Activated naive CD4-positive, alpha-beta T cell treated with anti-CD3 and anti-CD28 coated beads for 36 hours (primary cell): ENCODE measurements at regions of chr14 and their contacts with region 1.

Region 1: DNA sequence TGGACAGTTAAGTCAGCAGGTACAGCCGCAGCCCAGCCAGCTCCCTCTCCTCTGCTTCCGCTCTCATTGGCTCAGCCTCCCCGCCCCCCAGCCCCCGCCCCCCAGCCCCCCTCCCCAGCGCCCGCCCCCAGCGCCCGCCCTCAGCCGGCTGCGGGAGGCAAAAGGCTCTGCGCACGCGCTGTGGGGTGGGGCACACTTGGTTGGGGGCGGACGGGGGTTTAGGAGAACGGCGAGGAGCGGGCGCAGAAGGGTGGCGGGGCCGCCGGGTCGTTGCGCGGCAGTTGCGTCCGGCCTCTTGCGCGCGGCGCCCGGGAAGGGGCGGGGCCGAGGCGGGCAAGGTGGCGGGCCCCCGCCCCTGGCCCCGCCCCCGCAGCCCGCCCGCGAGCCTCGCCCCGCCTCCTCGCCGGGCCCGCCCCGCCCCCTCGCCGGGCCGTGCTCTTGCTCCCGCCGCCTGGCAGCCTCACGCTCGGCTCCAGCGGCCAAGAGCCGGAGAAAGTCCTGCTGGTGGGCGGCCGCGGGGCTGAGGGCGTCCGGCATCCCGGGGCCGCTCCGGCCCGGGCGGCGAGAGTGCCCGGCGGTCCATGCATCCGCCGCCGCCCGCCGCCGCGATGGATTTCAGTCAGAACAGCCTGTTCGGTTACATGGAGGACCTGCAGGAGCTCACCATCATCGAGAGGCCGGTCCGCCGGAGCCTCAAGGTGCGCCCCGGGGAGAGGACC is at the start of gene PPP4R4:
- DNase-seq: peak; percentile 95
- H3K4me3 Mint-ChIP-seq: peak within 1 kb of the TSS; percentile 76
- H3K27ac Mint-ChIP-seq: peak within 1 kb of the TSS; percentile 42
- H3K4me1 Mint-ChIP-seq: peaks cover 37% of the 10 kb centered on the region
- H3K27me3 Mint-ChIP-seq: no peaks in the 10 kb centered on the region
- total RNA-seq, gene PPP4R4: 13.2 to 13.9 TPM

Region 2: GRCh38 chr14:93959239-93960107 is 214.6 kb before region 1 on chr14:
- CTCF ChIA-PET with region 1: no interaction called
- intact Hi-C with region 1: loop called (anchors 5 kb)
- DNase-seq: peak; percentile 98
- H3K4me3 Mint-ChIP-seq: peak overlapping the region; percentile 68
- H3K27ac Mint-ChIP-seq: peak overlapping the region; percentile 99
- H3K4me1 Mint-ChIP-seq: peaks cover 95% of the 10 kb centered on the region
- H3K27me3 Mint-ChIP-seq: no peaks in the 10 kb centered on the region

Region 3: GRCh38 chr14:94036313-94037050 is 137.6 kb before region 1 on chr14:
- CTCF ChIA-PET with region 1: interaction called, 23 read pairs
- intact Hi-C with region 1: no loop called
- DNase-seq: peak; percentile 88
- H3K4me3 Mint-ChIP-seq: no peak overlapping the region
- H3K27ac Mint-ChIP-seq: no peak overlapping the region
- H3K4me1 Mint-ChIP-seq: peaks cover 3% of the 10 kb centered on the region
- H3K27me3 Mint-ChIP-seq: no peaks in the 10 kb centered on the region

Region 4: GRCh38 chr14:94136575-94137331 is 37.3 kb before region 1 on chr14:
- CTCF ChIA-PET with region 1: interaction called, 134 read pairs
- intact Hi-C with region 1: no loop called
- DNase-seq: peak; percentile 95
- H3K4me3 Mint-ChIP-seq: no peak overlapping the region
- H3K27ac Mint-ChIP-seq: no peak overlapping the region
- H3K4me1 Mint-ChIP-seq: peaks cover 2% of the 10 kb centered on the region
- H3K27me3 Mint-ChIP-seq: no peaks in the 10 kb centered on the region

Region 5: GRCh38 chr14:94345337-94346064 is 171.5 kb after region 1 on chr14:
- CTCF ChIA-PET with region 1: no interaction called
- intact Hi-C with region 1: loop called (anchors 2 kb)
- DNase-seq: no peak
- H3K4me3 Mint-ChIP-seq: no peak overlapping the region
- H3K27ac Mint-ChIP-seq: peak overlapping the region; percentile 54
- H3K4me1 Mint-ChIP-seq: peaks cover 33% of the 10 kb centered on the region
- H3K27me3 Mint-ChIP-seq: peaks cover 35% of the 10 kb centered on the region

Region 6: DNA sequence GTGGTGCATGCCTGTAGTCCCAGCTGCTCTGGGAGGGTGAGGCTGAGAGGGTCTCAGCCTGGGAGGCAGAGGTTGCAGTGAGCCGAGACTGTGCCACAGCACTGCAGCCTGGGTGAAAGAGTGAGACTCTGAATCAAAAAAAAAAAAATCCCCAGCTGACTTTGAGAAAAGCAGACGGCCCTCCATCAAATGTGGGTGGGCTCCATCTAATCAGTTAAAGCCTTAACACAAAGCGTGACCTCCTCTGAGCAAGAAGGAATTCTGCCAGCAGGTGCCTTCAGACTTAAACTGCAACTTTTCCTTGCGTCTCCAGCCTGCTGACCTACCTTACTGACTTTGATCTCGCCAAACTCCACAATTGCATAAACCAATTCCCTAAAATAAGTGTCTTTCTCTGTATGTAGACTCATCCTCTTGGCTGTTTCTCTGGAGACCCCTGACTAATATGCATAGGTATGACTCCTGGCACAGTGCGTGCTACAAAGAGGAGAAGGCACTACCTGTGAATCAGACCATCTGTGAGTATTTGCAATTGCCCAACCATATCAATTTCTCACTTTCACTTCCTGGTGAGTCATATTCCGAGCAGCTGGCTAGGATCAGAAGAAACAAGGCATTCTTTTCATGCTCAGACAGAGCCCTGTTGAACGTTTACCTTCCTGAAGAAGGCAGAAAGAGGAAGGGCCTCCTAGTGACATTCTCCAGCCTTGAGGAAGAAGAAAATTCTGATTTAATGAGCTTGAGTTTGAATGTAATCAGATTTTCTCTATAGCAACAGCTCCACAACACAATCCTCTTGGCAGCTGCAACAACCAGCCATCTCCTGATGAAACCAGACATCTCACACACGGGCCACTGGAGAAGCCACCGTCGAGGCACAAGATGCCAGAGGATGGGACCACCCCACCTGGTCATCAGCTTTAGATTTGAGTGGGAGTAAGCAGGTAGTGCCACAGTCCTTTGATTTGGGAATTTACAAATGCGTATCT is 1091.4 kb after region 1 on chr14:
- CTCF ChIA-PET with region 1: no interaction called
- intact Hi-C with region 1: loop called (anchors 5 kb)
- DNase-seq: peak; percentile 79
- H3K4me3 Mint-ChIP-seq: no peak overlapping the region
- H3K27ac Mint-ChIP-seq: peak overlapping the region; percentile 56
- H3K4me1 Mint-ChIP-seq: peaks cover 36% of the 10 kb centered on the region
- H3K27me3 Mint-ChIP-seq: no peaks in the 10 kb centered on the region